Thyroid gland (tissue), 4 donors: ENCODE measurements at regions of chr2 and their contacts with region 1.

Region 1: GRCh38 chr2:127486247-127487058 is 39.8 kb downstream of the IWS1 start:
- DNase-seq: no peak
- H3K4me3 ChIP-seq: no peak overlapping the region
- H3K27ac ChIP-seq: no peak overlapping the region
- H3K4me1 ChIP-seq: peaks cover 5 to 11% of the 10 kb centered on the region in 2 donors
- H3K27me3 ChIP-seq: no peaks in the 10 kb centered on the region
- CTCF ChIP-seq: no peak
- POLR2A ChIP-seq: no peak

Region 2: GRCh38 chr2:126945118-126945517 is 541.3 kb before region 1 on chr2:
- intact Hi-C with region 1: no loop called
- DNase-seq: peak; percentile 17 to 20
- H3K4me3 ChIP-seq: no peak overlapping the region
- H3K27ac ChIP-seq: no peak overlapping the region
- H3K4me1 ChIP-seq: no peaks in the 10 kb centered on the region
- H3K27me3 ChIP-seq: no peaks in the 10 kb centered on the region
- CTCF ChIP-seq: no peak
- POLR2A ChIP-seq: no peak

Region 3: GRCh38 chr2:127324635-127325034 is 161.8 kb before region 1 on chr2:
- intact Hi-C with region 1: loop called (anchors 10 kb)
- DNase-seq: peak in 1 of 2 donors; percentile 12
- H3K4me3 ChIP-seq: no peak overlapping the region
- H3K27ac ChIP-seq: no peak overlapping the region
- H3K4me1 ChIP-seq: no peaks in the 10 kb centered on the region
- H3K27me3 ChIP-seq: no peaks in the 10 kb centered on the region
- CTCF ChIP-seq: peak in 4 of 6 experiments; percentile 32 to 71 (median 62)
- POLR2A ChIP-seq: no peak

Region 4: GRCh38 chr2:127844973-127845372 is 358.5 kb after region 1 on chr2:
- intact Hi-C with region 1: no loop called
- DNase-seq: peak; percentile 66 to 70
- H3K4me3 ChIP-seq: no peak overlapping the region
- H3K27ac ChIP-seq: no peak overlapping the region
- H3K4me1 ChIP-seq: peaks cover 0 to 3% of the 10 kb centered on the region in 2 donors
- H3K27me3 ChIP-seq: no peaks in the 10 kb centered on the region
- CTCF ChIP-seq: no peak
- POLR2A ChIP-seq: no peak

Region 5: GRCh38 chr2:128108166-128108565 is 621.7 kb after region 1 on chr2:
- intact Hi-C with region 1: no loop called
- DNase-seq: no peak
- H3K4me3 ChIP-seq: no peak overlapping the region
- H3K27ac ChIP-seq: no peak overlapping the region
- H3K4me1 ChIP-seq: no peaks in the 10 kb centered on the region
- H3K27me3 ChIP-seq: no peaks in the 10 kb centered on the region
- CTCF ChIP-seq: no peak
- POLR2A ChIP-seq: no peak